GM12878 (cell line): ENCODE measurements at regions of chr9 and their contacts with region 1.

Region 1: DNA sequence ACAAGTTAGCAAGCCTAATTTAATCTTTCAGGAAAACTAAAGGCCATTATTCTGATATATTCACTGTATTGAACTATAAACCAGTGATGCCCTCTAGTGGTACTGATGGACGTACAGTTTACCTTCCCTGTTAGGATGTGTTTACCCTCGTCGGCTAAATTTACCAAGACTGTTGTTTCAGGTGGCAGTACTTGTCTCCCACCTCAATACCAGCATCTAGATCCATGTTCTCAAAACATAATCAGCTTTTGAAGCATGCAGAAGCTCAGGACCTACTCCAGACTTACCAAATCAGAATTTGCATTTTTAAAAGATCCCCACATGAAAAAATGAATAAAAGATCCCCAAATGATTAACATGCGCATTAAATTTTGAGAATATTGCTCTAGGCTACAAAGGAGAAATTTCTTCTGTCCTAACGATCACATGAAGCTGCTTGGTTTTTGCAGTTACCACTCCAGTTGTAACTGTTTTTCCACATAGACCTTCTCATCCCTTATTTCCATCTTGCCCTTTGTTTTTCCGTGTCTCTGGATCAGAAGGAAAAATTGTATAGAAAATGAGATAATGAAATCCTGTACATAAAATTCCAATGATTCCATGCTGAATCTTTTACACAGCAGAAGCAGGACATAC is 3.2 kb upstream of the BAAT start:
- DNase-seq: no peak
- ATAC-seq: peak; percentile 85
- H3K4me3 ChIP-seq: no peak overlapping the region
- H3K27ac ChIP-seq: no peak overlapping the region
- H3K4me1 ChIP-seq: no peaks in the 10 kb centered on the region
- H3K27me3 ChIP-seq: no peaks in the 10 kb centered on the region
- CTCF ChIP-seq: peak; percentile 35 to 42 (median 40); a peak in 5 of 6 replicates
- EP300 ChIP-seq: no peak
- POLR2A ChIP-seq: no peak
- RAD21 ChIP-seq: 0 out of 2 replicates have a peak, but pooled peaks have one; percentile 10

Region 2: DNA sequence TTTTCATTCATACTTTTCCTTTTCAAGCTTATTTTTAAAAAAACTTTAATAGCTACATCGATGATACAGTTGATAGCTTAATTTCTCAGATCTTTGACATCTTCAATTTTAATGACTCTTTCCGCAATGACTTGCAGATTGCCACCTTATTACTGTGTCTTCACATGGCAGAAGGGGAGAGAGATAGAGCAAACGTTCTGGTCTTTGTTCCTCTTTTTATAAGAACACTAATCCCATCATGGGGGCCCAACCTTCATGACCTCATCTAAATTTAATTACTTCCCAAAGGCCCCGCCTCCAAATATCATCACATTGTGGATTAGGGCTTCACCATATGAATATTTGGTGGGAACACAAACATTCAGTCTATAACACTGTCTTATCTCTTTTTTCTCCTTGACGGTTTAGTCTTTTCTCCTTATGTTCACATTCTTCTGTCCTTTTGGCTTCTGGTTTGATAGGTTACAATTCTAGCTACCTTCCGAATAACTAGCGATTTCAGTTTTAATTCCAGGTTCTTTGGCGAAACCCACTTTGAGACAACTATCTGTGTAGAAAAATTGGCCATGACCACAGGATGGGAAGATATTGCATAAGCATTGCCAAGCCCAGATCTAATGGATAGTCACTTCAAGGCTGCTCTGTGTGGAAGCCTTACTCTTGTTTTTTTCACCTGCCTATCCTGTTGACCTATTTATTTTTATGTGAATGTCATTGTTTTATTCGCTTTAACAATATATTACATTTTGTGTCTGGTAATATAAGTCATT is 15.7 kb after region 1 on chr9:
- CTCF ChIA-PET with region 1: interaction called, 23 read pairs
- POLR2A ChIA-PET with region 1: no interaction called
- RAD21 ChIA-PET with region 1: interaction called, 7 read pairs
- SMC1A ChIA-PET with region 1: interaction called, 8 read pairs
- in situ Hi-C with region 1: no loop called
- intact Hi-C with region 1: no loop called
- DNase-seq: no peak
- ATAC-seq: no peak
- H3K4me3 ChIP-seq: no peak overlapping the region
- H3K27ac ChIP-seq: no peak overlapping the region
- H3K4me1 ChIP-seq: 0 out of 2 replicates have a peak, but pooled peaks cover 3% of the 10 kb centered on the region
- H3K27me3 ChIP-seq: no peaks in the 10 kb centered on the region
- CTCF ChIP-seq: no peak
- EP300 ChIP-seq: no peak
- POLR2A ChIP-seq: no peak
- RAD21 ChIP-seq: no peak